ENCODE measurements at regions of chr15 and their contacts with region 1.

Region 1: DNA sequence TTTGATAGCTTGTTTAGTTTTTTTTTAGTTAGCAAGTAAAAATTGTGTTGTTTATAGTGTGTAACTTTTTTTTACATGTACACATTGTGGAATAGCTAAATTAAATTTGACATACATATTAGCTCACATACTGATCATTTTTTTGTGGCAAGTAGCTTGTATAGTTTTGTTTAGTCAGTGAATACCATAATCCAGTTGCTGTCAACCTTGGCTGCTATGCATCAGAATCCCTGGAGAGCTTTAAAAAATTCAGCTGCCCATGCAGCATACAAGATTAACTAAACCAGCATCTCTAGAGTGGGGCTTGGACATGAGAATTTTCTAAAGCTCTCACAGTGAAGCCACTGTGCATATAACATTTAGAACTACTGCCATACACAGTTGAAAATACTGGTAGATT is 54.0 kb downstream of the TMOD3 start:
- DNase-seq: no peak
- ATAC-seq: no peak
- H3K4me3 ChIP-seq: no peak overlapping the region
- H3K27ac ChIP-seq: peak overlapping the region in 1 of 10 donors; percentile 41
- H3K4me1 ChIP-seq: peaks cover 0 to 64% (median 38%) of the 10 kb centered on the region in 9 donors
- H3K27me3 ChIP-seq: no peaks in the 10 kb centered on the region
- CTCF ChIP-seq: no peak

Region 2: DNA sequence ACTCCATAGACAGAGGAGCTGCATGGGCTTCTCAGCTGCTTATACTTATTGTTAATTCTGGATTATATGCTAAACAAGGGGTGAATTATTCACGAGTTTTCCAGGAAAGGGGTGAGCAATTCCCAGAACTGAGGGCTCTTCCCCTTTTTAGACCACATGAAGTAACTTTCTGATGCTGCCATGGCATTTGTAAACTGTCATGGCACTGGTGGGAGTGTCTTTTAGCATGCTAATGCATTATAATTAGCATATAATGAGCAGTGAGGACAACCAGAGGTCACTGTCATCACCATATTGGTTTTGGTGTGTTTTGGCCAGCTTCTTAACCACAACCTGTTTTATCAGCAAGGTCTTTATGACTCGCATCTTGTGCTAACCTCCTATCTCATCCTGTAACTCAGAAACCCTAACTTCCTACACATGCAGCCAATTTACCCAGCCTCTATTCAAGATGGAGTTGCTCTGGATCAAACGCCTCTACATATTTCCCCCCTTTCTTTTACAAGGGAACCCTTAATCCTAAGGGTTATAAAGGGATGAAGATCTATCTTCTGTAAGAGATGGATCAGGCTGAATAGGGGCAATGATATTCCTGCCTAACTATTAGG is 248.7 kb before region 1 on chr15:
- intact Hi-C with region 1: no loop called
- DNase-seq: no peak
- ATAC-seq: no peak
- H3K4me3 ChIP-seq: no peak overlapping the region
- H3K27ac ChIP-seq: no peak overlapping the region
- H3K4me1 ChIP-seq: peaks cover 0 to 15% (median 0%) of the 10 kb centered on the region in 9 donors
- H3K27me3 ChIP-seq: no peaks in the 10 kb centered on the region
- CTCF ChIP-seq: no peak

Region 3: DNA sequence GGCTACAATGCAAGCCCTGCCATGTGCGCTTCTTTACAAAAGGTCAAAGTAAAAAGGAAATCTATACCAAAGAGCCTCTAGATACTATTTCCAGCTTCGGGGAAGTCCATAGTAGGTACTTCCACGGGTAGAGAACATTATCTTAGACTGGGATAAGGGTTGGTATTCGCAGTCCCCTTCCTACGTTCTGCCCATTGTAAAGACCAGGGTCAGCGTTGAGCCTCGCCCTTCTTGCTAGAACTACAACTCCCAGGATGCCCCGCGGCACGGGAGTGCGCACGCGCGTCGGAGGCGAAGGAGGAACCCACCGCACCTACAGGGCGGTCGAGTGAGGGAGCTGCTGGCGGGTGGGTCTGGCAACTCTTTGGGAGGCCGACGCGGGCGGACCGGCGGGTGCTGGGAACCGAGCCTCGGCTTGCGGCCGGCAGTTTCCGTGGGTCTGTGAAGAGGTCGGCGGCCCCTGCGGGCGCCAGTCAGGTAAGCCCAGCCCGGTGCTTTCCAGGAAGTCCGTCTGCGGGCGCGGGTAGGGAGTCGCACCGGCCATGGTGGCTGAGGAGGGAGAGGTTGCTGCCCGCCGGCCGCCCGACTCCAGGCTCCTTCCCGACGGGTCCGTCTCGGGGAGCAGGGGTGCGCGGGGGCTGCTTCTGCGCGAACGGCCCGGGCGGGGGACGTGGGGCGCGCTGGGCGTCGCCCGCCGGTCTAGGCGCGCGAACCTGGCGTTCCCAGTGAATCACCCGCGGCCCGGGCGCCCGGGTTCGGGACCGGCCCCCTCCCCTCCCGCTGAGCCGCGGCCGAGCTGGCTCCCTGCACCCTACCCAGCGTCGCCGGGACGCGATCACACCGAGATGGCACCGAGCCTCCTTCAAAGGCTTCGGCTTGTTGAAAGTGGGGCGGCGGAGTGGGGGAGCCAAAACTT is 53.8 kb before region 1 on chr15 and contains the start of gene TMOD3:
- intact Hi-C with region 1: loop called in 4 of 10 experiments (anchors 2 to 5 kb)
- DNase-seq: peak; percentile 92 to 97
- ATAC-seq: peak; percentile 97 to 99 (median 98)
- H3K4me3 ChIP-seq: peak within 1 kb of the TSS; percentile 77 to 99 (median 92)
- H3K27ac ChIP-seq: peak within 1 kb of the TSS; percentile 82 to 99 (median 95)
- H3K4me1 ChIP-seq: peaks cover 0 to 42% (median 38%) of the 10 kb centered on the region in 9 donors
- H3K27me3 ChIP-seq: no peaks in the 10 kb centered on the region
- CTCF ChIP-seq: peak in 2 of 9 donors; percentile 12 to 21
- total RNA-seq, gene TMOD3: 15.2 to 28.7 (median 18.2) TPM

Region 4: GRCh38 chr15:51842852-51843737 is 40.3 kb before region 1 on chr15:
- intact Hi-C with region 1: loop called in 2 of 10 experiments (anchors 5 kb)
- DNase-seq: no peak
- ATAC-seq: peak in 2 of 8 donors; percentile 11 to 32
- H3K4me3 ChIP-seq: no peak overlapping the region
- H3K27ac ChIP-seq: peak overlapping the region in 3 of 10 donors; percentile 16 to 69 (median 34)
- H3K4me1 ChIP-seq: peaks cover 11 to 96% (median 75%) of the 10 kb centered on the region in 9 donors
- H3K27me3 ChIP-seq: no peaks in the 10 kb centered on the region
- CTCF ChIP-seq: no peak

Region 5: DNA sequence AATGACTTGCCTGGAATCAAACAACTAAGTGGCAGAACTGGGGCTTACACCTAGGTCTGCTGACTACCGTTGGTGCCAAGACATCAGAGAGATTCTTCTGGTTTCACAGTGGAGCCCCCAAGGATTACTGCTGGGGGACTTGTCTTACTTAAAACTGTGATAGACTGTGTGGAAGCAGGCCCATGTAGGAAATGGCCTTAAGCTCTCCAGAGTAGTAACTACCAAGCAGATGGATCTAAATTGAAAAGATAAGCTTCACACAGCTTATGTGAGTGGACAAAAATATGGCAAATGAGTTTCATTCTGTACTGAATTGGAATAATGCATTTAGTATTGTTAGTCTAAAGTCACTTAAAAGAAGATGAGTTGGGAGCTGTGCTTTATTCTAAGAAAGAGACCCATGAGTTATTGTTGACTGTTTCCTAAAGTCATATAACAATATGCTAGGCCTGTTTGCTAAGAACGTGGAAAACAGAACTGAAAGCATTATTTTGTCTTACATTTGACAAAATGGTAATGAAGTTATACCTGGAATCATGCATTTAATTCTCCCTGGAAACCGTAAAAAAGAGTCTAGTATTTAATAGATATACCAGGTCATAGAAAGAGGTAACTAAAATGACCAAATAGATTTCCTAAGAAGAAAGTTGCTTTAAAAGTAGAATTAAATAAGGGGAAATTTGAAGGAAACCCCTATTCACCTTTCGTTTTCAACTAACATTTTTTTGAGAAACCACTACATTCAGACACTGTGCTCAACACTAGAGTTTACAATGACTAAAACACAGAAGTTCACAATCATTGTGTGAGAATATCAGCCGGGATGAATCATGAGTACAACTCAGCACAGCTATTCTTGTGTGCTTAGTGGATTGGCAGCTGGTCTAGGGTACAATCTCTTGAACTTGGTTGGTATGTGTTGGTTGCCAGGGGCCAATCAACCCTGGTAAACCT is 122.6 kb after region 1 on chr15:
- intact Hi-C with region 1: no loop called
- DNase-seq: peak in 1 of 2 donors; percentile 14
- ATAC-seq: peak in 6 of 8 donors; percentile 64 to 91 (median 84)
- H3K4me3 ChIP-seq: no peak overlapping the region
- H3K27ac ChIP-seq: peak overlapping the region in 9 of 10 donors; percentile 15 to 74 (median 59)
- H3K4me1 ChIP-seq: peaks cover 6 to 53% (median 30%) of the 10 kb centered on the region in 9 donors
- H3K27me3 ChIP-seq: no peaks in the 10 kb centered on the region
- CTCF ChIP-seq: no peak